RWPE1 (cell line): ENCODE measurements at regions of chr20 and their contacts with region 1.

Region 1: DNA sequence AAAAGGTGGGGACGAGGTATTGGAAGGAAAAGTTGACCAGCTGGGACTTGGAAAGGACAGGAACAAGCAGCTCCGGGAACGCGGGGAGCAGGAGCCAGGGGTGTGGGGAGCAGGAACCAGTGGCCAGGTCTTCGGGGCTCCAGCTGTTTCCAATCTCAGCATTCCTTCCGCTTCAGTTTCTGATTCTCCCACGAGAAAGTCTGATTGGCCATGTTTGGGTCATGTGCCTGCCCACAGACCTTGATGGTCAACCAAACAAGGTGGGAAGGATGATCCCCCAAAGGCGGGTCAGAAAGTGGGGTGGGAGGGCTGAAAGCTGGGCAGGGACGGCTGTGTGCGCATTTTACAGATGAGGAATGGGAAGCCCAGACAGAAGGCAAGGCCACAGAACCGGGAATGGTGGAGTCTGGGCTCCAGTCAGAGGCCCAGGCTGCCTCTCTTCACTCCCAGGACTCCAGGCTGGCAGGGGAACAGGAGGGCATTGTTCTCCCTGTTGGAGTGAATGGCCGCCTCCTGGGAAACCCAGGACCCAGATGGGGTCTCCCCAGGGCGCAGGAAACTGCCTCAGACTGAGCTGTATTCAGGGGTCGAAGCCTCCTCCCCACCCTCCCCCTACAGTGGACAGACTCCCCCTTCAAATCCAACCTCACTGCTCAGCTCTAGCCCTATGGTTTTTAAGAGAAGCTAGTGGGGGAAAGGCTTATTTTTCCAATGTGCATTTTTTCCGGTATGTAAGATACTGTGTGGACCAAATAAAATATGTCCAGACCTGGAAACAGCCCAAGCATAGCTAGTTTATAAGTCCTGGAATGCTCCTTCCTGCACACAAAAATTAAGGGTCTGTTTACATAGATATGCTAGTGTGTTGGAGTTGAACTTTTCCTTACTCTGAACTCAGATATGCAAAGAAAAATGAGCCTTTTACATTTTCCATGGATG is 12.2 kb upstream of the PTGIS start:
- DNase-seq: no peak
- H3K27ac ChIP-seq: no peak overlapping the region
- CTCF ChIP-seq: no peak

Region 2: DNA sequence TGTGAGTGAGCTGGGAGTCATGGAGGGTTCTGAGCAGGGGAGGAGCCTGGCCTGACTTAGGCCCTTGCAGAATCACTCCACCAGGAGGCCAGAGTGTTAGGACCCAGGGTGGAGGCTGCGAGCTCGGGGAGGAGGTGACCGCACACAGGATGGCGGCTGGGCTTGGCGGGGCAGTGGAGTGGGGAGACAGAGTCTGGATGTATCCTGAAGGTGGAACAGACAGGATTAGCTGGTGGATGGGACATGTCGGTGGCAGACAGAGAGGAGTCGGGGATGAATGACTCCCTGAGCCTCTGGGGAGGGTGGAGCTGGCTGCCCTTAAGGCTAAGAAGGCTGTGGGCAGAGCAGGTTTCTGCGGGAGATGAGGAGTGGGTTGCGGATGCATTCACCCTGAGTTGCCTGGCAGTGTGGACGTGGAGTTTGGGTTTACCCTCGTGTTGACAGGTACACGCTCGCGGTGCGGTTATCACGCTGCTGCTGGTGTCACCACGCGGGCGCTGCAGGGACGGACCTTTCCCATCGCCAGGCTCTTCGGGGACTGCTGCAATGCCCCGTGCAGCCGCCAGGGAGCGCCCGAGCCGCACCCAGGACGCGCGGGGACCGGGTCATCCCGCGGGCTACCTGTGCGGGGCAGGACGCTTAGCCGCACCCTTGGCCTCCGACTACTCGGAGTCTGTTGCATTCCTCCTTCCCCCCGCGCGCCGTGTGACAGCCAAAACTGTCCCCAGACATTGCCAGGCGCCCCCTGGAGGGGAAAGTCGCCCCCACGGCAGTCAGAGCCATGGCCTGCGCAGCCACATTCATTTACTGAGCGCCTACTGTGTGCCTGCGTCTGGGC is 30.8 kb after region 1 on chr20:
- CTCF ChIA-PET with region 1: interaction called, 10 read pairs
- POLR2A ChIA-PET with region 1: no interaction called
- DNase-seq: peak; percentile 93
- H3K27ac ChIP-seq: no peak overlapping the region
- CTCF ChIP-seq: peak; percentile 100